HepG2 (cell line): ENCODE measurements at regions of chr19 and their contacts with region 1.

Region 1: GRCh38 chr19:12440541-12441316 is at the start of gene ZNF443:
- DNase-seq: peak; percentile 99
- ATAC-seq: peak; percentile 96
- H3K4me3 ChIP-seq: peak within 1 kb of the TSS; percentile 72 to 96 (median 83)
- H3K27ac ChIP-seq: peak within 1 kb of the TSS; percentile 97
- H3K4me1 ChIP-seq: peaks cover 27% of the 10 kb centered on the region
- H3K27me3 ChIP-seq: no peaks in the 10 kb centered on the region
- CTCF ChIP-seq: no peak
- EP300 ChIP-seq: peak in 1 of 2 experiments; percentile 56; a peak in 2 of 4 replicates
- POLR2A ChIP-seq: peak; percentile 84 to 91
- RAD21 ChIP-seq: 0 out of 2 replicates have a peak, but pooled peaks have one; percentile 37
- total RNA-seq, gene ZNF443: 19.0 and 24.2 TPM in 2 replicates

Region 2: GRCh38 chr19:12400633-12401502 is 39.9 kb before region 1 on chr19 and contains the start of gene ZNF799:
- CTCF ChIA-PET with region 1: no interaction called
- POLR2A ChIA-PET with region 1: interaction called, 8 read pairs
- in situ Hi-C with region 1: no loop called
- intact Hi-C with region 1: loop called (anchors 2 kb)
- DNase-seq: peak; percentile 100
- ATAC-seq: peak; percentile 95
- H3K4me3 ChIP-seq: peak within 1 kb of the TSS; percentile 79 to 96 (median 92)
- H3K27ac ChIP-seq: peak within 1 kb of the TSS; percentile 88
- H3K4me1 ChIP-seq: peaks cover 26% of the 10 kb centered on the region
- H3K27me3 ChIP-seq: no peaks in the 10 kb centered on the region
- CTCF ChIP-seq: peak; percentile 17; the same call in 1 of the 2 replicates
- EP300 ChIP-seq: peak; percentile 59 to 61; a peak in 3 of 4 replicates
- POLR2A ChIP-seq: peak; percentile 78 to 83
- RAD21 ChIP-seq: peak; percentile 27; the same call in 1 of the 2 replicates
- total RNA-seq, gene ZNF799: 17.9 and 27.0 TPM in 2 replicates

Region 3: DNA sequence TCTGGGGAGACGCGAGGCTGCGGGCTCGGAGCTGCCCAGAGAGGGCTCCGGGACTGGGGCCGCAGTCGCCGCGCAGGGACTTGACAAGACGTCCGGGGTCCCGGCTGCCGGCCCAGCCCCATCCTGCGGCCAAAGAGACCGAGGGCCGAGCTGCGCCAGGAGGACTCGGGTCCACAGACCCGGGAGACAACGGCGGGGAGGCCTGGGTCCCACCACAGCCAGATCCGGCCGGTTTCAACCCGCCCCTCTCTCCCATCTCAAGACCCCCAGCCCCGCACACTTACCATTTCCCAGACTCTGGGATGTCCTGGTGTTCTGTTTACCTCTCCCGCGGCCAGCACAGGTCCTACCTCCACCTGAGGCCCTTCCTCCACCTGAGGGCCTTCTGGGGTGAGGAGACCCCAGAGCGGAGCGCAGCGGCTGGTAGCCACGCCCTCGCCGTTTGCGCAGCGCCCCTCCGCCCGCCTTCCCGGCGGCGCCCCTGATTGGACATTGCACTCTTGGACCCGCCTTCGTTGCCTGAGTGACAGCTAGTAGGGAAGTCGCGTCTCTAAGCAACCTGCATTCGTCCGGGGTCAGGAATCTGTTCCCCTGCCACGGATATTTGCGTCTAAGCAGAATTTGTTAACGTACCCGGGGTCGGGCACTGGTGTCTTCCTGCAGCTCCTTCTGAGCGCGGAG is 43.8 kb after region 1 on chr19 and contains the start of gene ZNF709:
- CTCF ChIA-PET with region 1: no interaction called
- POLR2A ChIA-PET with region 1: interaction called, 4 read pairs
- in situ Hi-C with region 1: loop called (anchors 5 kb)
- intact Hi-C with region 1: loop called (anchors 5 kb)
- DNase-seq: peak; percentile 86
- ATAC-seq: peak; percentile 94
- H3K4me3 ChIP-seq: peak within 1 kb of the TSS; percentile 88 to 100 (median 93)
- H3K27ac ChIP-seq: peak within 1 kb of the TSS; percentile 57
- H3K4me1 ChIP-seq: peaks cover 37% of the 10 kb centered on the region
- H3K27me3 ChIP-seq: no peaks in the 10 kb centered on the region
- CTCF ChIP-seq: no peak
- EP300 ChIP-seq: no peak
- POLR2A ChIP-seq: peak; percentile 88 to 98
- RAD21 ChIP-seq: no peak; the same call in 1 of the 2 replicates
- total RNA-seq, gene ZNF709: 3.9 and 4.7 TPM in 2 replicates

Region 4: DNA sequence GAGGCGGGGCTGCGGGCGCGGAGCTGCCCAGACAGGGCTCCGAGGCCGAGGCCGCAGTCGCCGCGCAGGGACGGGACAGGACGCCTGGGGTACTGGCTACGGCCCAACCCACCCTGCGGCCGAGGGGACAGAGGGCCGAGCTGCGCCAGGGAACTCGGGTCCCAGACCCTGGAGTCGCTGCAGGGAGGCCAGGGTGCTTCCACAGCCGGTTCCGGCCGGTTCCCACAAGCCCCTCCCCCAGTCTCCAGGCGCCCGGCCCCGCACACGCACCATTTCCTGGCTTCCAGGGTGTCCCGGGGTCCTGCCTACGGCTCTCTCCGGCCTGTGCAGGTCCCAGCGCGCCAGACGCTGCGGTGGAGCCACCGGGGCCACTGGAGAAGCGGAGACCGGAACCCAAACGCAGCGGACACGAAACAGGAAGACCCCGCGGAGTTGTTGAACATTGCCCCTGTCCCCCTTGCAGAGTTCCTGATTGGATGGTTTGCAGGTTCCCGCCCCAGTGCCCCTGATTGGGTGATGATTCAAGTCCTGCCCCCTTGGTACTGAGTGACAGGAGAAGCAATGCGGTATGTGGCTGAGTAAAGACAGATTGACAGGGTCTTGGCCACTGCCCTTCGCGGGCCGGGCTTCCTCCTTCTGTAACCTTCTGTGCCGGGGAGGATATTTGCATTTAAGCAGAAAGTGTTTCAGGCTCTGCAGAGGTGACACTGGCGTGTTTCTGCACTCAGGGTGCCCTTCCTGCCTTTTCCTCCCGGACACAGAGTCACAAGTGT is 110.5 kb after region 1 on chr19 and contains the start of gene ZNF564:
- CTCF ChIA-PET with region 1: no interaction called
- POLR2A ChIA-PET with region 1: interaction called, 5 read pairs
- in situ Hi-C with region 1: no loop called
- intact Hi-C with region 1: loop called (anchors 5 kb)
- DNase-seq: peak; percentile 100
- ATAC-seq: peak; percentile 96
- H3K4me3 ChIP-seq: peak within 1 kb of the TSS; percentile 86 to 92 (median 91)
- H3K27ac ChIP-seq: peak within 1 kb of the TSS; percentile 93
- H3K4me1 ChIP-seq: peaks cover 44% of the 10 kb centered on the region
- H3K27me3 ChIP-seq: no peaks in the 10 kb centered on the region; a peak in 1 of 5 replicates
- CTCF ChIP-seq: peak; percentile 6; the same call in 1 of the 2 replicates
- EP300 ChIP-seq: peak in 1 of 2 experiments; percentile 22; a peak in 2 of 4 replicates
- POLR2A ChIP-seq: peak; percentile 80 to 95
- RAD21 ChIP-seq: 0 out of 2 replicates have a peak, but pooled peaks have one; percentile 26
- total RNA-seq, gene ZNF564: 11.1 and 11.2 TPM in 2 replicates